ENCODE measurements at regions of chr22 and their contacts with region 1.

Region 1: GRCh38 chr22:29780748-29781676 is 13.8 kb downstream of the UQCR10 start:
- DNase-seq: no peak
- ATAC-seq: no peak
- H3K4me3 ChIP-seq: no peak overlapping the region
- H3K27ac ChIP-seq: peak overlapping the region; percentile 81 to 90 (median 87)
- H3K4me1 ChIP-seq: peaks cover 39 to 42% of the 10 kb centered on the region in 2 donors
- H3K27me3 ChIP-seq: no peaks in the 10 kb centered on the region
- CTCF ChIP-seq: no peak
- POLR2A ChIP-seq: no peak

Region 2: DNA sequence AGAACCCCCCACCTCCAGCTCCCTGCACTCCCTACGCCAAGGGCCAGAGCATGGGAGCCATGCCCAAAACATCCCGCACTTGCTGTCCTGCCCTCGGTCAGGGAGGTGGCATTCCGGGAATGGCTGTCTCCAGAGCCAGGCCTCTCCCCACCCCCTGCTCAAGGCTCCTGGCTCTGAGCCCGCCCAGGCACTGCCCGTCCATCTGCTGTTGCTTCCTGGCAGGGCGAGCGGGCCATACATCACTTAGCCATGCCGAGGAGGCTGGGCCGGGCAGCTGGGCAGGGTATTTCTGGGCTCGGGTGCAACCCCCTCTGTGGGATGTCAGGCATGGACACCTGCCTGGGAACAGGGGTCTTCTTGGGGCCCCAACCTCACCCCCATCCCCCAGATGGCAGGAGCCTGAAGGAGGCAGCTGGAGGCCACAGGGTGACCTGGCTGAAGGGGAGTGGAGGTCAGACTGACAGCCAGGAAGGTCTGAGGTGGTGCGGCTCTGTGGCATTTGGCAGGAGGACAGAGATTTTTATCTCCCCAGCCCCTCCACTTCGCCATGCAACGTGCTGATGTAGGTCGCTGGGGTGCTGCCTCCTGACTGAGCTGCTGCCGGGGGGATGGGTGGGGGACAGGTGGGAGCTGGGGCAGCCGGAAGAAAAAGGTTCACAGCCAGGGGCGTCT is 70.0 kb before region 1 on chr22:
- in situ Hi-C with region 1: no loop called
- intact Hi-C with region 1: no loop called
- DNase-seq: peak; percentile 61 to 73
- ATAC-seq: peak; percentile 75 to 82
- H3K4me3 ChIP-seq: no peak overlapping the region
- H3K27ac ChIP-seq: no peak overlapping the region
- H3K4me1 ChIP-seq: peaks cover 9% of the 10 kb centered on the region in 2 donors
- H3K27me3 ChIP-seq: no peaks in the 10 kb centered on the region
- CTCF ChIP-seq: no peak
- POLR2A ChIP-seq: no peak

Region 3: GRCh38 chr22:29798801-29799680 is 18.0 kb after region 1 on chr22:
- in situ Hi-C with region 1: no loop called
- intact Hi-C with region 1: loop called (anchors 2 kb)
- DNase-seq: peak; percentile 95 to 99
- ATAC-seq: peak; percentile 91 to 95
- H3K4me3 ChIP-seq: peak overlapping the region in 3 of 4 donors; percentile 16 to 35 (median 30)
- H3K27ac ChIP-seq: peak overlapping the region; percentile 88 to 94 (median 92)
- H3K4me1 ChIP-seq: peaks cover 53 to 60% of the 10 kb centered on the region in 2 donors
- H3K27me3 ChIP-seq: no peaks in the 10 kb centered on the region
- CTCF ChIP-seq: peak in 2 of 5 experiments; percentile 14 to 17
- POLR2A ChIP-seq: peak; percentile 19 to 28

Measured in gastrocnemius medialis (tissue), 4 donors.